Activated CD4-positive, alpha-beta T cell treated with anti-CD3 and anti-CD28 coated beads for 36 hours (primary cell): ENCODE measurements at regions of chr19 and their contacts with region 1.

Region 1: DNA sequence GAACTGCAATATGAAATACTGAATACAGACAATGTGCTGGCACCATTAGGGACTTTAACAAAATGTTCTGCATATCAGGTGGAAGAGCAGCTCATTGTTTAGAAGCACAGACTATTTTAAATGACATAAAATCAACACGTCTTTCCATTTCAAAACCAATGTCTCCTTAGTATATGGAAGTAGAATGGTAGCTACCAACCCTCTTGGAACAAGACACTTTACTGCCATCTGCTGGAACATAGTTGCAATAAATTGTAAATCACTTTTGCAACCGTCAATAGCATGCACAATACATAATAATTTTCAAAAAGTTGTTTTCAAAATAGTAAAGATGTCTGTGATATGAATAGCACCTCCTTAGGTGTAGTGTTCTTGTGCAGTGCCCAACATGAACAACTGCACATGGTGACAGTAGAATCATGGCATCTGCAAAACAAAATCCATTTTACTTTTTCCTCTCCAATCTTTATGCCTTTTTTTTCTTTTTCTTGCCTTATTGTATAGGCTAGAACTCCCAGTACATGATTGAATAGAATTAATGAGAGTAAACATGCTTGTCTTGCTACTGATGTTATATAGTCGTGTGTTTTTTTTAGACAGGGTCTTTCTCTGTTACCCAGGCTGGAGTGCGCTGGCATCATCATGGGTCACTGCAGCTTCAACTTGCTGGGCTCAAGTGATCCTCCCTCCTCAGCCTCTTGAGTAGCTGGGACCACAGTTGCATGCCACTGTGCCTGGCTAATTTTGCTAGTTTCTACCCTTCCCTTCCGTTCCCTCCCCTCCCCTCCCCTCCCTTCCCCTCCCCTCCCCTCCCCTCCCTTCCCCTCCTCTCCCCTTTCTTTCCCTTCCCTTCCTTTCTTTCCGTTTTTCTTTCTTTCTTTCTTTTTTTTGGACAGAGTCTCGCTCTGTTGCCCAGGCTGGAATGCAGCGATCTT is 7.8 kb upstream of the LYPD5 start:
- DNase-seq: no peak
- ATAC-seq: peak; percentile 83
- H3K4me3 Mint-ChIP-seq: no peak overlapping the region
- H3K27ac Mint-ChIP-seq: no peak overlapping the region
- H3K4me1 Mint-ChIP-seq: no peaks in the 10 kb centered on the region
- H3K27me3 Mint-ChIP-seq: peaks cover 8% of the 10 kb centered on the region

Region 2: GRCh38 chr19:43743022-43743421 is 67.0 kb before region 1 on chr19:
- CTCF ChIA-PET with region 1: interaction called, 46 read pairs
- POLR2A ChIA-PET with region 1: interaction called, 6 read pairs
- intact Hi-C with region 1: loop called (anchors 1 kb)
- DNase-seq: no peak
- ATAC-seq: no peak
- H3K4me3 Mint-ChIP-seq: no peak overlapping the region
- H3K27ac Mint-ChIP-seq: no peak overlapping the region
- H3K4me1 Mint-ChIP-seq: peaks cover 9% of the 10 kb centered on the region
- H3K27me3 Mint-ChIP-seq: no peaks in the 10 kb centered on the region

Region 3: DNA sequence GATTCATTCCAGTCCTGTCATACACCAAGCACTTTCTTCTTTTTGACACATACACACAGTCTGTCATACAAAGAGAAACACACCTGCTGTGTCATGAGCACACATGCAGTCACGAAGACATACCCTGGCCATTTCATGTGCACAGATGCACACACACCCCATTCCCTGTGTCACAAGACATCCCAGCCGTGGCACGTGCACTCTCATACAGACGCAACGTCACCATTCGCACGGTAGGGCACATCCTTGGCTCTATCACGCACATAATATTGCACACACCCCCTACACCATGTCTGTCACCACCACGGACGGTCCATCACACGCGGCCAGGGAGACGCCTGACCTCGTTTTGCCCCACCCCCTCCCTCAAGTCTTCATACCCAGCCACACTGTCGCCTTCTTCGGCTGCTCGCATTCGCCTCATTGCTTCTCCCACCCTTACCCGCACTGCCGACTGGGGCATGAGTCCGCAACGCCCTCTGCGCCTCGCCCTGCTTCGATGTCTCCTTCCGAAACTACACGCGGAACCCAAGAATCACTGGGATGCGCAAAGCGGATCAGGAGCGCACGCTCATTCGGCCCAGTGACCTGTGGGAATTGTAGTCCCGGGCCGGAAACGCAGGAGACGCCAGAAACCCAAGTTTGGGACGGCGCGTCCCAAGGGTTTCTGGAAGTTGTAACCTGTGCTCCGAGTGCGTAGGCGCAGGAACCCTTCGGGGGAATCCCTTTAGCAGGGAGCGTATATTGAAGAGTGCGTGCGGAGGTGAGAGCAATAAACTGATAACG is 10.3 kb after region 1 on chr19:
- CTCF ChIA-PET with region 1: interaction called, 16 read pairs
- POLR2A ChIA-PET with region 1: no interaction called
- intact Hi-C with region 1: no loop called
- DNase-seq: peak; percentile 68
- ATAC-seq: peak; percentile 75
- H3K4me3 Mint-ChIP-seq: peak overlapping the region; percentile 73
- H3K27ac Mint-ChIP-seq: peak overlapping the region; percentile 56
- H3K4me1 Mint-ChIP-seq: peaks cover 11% of the 10 kb centered on the region
- H3K27me3 Mint-ChIP-seq: peaks cover 22% of the 10 kb centered on the region

Region 4: GRCh38 chr19:44566984-44567383 is 757.0 kb after region 1 on chr19:
- CTCF ChIA-PET with region 1: no interaction called
- POLR2A ChIA-PET with region 1: no interaction called
- intact Hi-C with region 1: no loop called
- DNase-seq: no peak
- ATAC-seq: no peak
- H3K4me3 Mint-ChIP-seq: no peak overlapping the region
- H3K27ac Mint-ChIP-seq: no peak overlapping the region
- H3K4me1 Mint-ChIP-seq: no peaks in the 10 kb centered on the region
- H3K27me3 Mint-ChIP-seq: peaks cover 10% of the 10 kb centered on the region